Activated T-helper 1 cell treated with anti-CD3 and anti-CD28 coated beads, Interleukin-12 subunit alpha, Interleukin-12 subunit beta, Interleukin-2, Interleukin-4 antibody, amounts not matched to agents 30 ng/mL and 10 ng/mL and 1 ng/mL, durations not matched to agents 14 hours and 24 hours and 36 hours (primary cell): ENCODE measurements at regions of chr13 and their contacts with region 1.

Region 1: DNA sequence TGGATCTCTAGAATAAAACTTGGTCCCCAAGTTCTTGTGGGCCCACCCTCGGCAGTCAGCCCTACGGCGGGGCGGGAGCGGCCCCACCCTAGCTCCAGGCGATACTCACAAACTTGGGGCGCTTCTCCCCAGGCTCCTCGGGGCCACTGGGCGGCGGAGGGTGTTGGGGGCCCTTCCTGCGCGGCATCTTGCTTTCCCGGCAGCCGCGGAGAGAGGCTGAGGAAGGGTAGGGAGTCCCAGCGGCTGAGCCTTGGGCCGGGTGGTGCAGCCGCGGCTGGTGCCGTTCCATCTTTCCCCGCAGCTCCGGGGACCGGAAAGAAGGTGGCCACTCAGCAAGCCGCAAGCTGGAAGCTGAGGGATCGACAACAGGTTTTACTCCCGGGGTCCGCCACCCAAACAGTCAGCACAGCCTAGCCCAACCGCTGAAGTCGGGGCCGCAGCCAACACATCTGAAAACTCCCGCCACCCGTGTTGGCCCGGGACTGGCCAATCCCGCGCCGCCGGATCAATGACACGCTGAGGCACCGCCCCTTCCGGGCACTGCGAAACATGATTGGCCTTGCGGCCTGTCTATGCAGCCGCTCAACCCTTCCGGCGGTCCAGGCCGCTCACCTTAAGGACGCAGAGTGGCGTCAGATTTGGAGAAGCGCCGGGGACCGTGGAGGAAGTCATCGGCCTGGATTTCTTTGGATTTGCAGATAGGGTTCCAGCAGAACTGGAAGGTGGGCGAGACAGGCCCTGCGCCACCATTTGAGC is at the start of gene DIAPH3:
- DNase-seq: peak; percentile 93
- H3K4me3 Mint-ChIP-seq: peak within 1 kb of the TSS; percentile 93
- H3K27ac Mint-ChIP-seq: peak within 1 kb of the TSS; percentile 94
- H3K4me1 Mint-ChIP-seq: peaks cover 38% of the 10 kb centered on the region
- H3K27me3 Mint-ChIP-seq: no peaks in the 10 kb centered on the region
- total RNA-seq, gene DIAPH3: 22.8 and 24.6 TPM in 2 replicates

Region 2: DNA sequence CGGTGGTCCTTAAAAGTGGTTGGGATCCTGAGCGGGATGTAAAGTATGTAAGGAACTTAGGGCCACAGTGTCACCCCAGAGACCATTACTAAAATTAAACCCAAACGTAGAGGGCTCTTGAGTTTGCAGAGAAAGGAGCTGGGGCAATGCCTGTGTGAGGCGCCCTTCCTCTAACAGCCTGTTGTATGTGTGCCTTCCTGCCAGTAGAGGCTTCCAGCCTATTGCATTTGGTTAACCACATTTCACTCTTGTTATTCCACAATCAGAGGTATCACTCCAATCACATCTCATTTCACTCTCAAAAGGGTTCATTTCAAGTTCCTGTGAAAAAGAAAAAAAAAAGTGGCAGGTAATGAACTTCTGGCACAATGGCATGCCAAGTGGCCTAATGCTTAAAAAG is 29.3 kb before region 1 on chr13:
- intact Hi-C with region 1: loop called (anchors 1 kb)
- DNase-seq: no peak
- H3K4me3 Mint-ChIP-seq: no peak overlapping the region
- H3K27ac Mint-ChIP-seq: no peak overlapping the region
- H3K4me1 Mint-ChIP-seq: peaks cover 20% of the 10 kb centered on the region
- H3K27me3 Mint-ChIP-seq: no peaks in the 10 kb centered on the region

Region 3: DNA sequence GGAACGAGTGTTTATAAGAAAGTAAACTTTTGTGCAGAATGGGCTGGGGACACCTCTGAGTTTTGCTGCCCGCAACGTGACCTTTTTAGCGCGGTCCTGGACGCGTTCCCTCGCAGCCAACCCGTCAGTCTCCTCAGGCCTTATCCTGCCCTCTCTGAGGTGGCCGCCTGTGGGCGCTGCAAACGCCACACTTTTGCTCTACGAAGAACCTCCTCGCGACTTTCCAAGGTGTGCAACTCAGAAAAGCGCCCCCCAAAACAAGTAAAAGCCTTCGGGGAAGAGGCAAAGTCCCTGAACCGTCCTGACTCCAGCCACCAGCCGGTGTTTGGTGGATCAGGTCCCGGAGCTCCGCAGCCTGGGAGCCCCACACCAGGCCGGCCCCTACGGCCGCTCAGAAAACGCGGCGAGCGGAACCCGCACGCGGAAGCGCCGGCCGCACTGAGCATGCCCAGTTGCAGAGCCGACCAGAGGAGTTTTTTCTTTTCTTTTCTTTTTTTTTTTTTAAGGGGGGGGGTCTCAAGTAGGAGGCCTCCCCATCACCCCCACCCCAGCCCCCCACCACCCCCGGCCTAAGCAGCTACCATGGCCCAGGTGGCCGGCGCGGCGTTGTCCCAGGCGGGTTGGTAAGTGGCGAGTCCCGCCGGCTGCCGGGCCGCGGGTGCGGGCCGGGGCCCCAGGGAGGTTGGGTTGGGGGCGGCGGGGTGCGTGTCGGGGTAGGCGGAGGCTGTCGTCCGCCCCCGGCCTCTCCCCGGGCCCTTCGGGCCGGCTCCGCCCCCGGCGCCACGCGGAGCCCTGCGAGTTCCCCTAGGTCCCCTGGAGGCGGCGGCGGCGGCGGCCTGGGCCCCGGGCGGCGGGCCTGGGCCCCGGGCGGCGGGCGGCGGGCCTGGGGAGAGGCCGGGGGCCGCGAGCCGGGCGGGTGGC is 233.4 kb after region 1 on chr13 and contains the start of gene TDRD3:
- intact Hi-C with region 1: loop called (anchors 1 kb)
- DNase-seq: peak; percentile 75
- H3K4me3 Mint-ChIP-seq: peak within 1 kb of the TSS; percentile 95
- H3K27ac Mint-ChIP-seq: peak within 1 kb of the TSS; percentile 97
- H3K4me1 Mint-ChIP-seq: peaks cover 44% of the 10 kb centered on the region
- H3K27me3 Mint-ChIP-seq: no peaks in the 10 kb centered on the region
- total RNA-seq, gene TDRD3: 19.6 and 20.7 TPM in 2 replicates